Prostate gland (tissue), 2 donors: ENCODE measurements at regions of chr7 and their contacts with region 1.

Region 1: DNA sequence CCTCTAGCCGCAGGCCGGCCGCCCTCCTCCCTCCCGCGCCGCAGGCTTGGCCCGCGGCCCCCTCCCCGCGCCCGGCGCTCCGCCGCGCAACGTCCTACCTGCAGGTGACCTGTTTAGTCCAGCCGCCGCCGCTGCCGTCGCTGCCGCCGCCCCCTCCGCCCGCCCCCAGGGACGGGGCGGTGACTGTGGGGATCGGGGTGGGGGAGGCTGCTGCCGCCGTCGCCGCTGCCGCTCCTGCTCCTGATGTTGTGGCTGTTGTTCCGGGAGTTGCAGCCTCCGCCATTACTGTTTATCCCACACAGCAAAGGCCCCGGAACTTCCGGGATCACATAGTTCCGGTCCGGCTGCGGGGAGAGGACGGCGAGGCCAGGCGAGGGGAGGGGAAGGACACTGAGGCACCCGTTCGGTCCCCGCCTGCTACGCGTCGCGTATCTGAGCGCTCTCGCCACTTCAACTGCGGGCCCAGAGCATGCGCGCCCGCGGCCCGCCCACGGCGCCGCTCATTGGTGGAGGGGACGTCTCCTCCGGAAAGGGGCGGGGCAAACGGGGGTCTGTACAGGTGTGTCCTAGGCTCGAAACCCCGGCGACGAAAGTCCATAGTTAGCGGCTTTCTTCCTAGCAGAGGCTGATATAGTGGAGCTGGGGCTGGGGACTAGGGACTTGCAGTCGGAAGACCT is at the start of gene MKRN1:
- DNase-seq: peak; percentile 96
- H3K4me3 ChIP-seq: peak within 1 kb of the TSS; percentile 92 to 100
- H3K27ac ChIP-seq: peak within 1 kb of the TSS; percentile 91 to 92
- H3K4me1 ChIP-seq: no peaks in the 10 kb centered on the region
- H3K27me3 ChIP-seq: no peaks in the 10 kb centered on the region
- CTCF ChIP-seq: peak in 1 of 4 experiments; percentile 3
- POLR2A ChIP-seq: peak; percentile 87
- total RNA-seq, gene MKRN1: 69.0 to 108 TPM

Region 2: DNA sequence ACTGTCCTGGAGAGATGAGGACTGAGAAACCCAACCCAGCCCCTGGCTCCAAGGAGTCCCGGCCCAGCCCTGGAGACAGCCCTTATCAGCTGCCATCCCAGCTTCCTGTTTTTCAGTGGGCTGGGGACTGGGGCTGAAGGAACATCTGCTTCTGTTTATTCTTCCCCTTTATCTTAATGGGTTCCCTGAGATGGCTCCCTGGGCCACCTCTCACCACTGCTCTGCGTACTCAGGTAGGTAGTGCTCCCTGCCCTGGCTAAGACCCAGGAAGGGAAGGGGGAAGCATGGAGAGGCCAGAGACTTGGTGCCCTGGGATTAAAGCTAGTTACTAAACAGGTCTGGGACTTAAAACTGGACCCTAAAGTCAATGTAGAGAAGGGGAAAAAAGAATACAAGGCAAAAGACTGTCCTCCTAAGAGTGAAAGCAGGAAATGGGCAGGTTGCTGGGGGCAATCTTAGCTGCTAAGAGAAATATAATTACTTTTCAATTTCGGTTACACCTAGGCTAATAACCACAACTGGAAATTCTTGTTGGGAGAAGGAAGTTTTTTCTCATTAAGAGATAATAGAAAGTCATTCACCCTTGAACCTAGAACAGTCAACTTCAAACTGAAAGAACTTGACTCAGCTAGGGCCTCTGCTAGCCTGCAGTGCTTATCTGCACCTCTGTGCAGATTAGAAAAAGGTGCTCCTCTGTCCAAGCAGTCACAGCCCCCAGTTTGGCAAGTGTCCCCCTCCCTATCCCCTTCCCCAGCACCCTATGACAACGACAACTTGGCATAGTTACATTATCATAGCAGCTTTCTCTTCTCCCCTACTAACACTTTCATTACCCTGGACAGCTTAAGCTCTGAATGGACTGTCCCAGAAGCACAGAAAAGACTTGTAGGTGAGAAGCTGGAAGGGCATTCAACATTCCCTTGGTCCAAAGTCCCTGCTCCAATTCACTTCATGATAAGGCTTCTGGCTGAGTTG is 236.9 kb before region 1 on chr7:
- intact Hi-C with region 1: no loop called
- DNase-seq: no peak
- H3K4me3 ChIP-seq: no peak overlapping the region
- H3K27ac ChIP-seq: no peak overlapping the region
- H3K4me1 ChIP-seq: peaks cover 6% of the 10 kb centered on the region
- H3K27me3 ChIP-seq: no peaks in the 10 kb centered on the region
- CTCF ChIP-seq: no peak
- POLR2A ChIP-seq: no peak

Region 3: DNA sequence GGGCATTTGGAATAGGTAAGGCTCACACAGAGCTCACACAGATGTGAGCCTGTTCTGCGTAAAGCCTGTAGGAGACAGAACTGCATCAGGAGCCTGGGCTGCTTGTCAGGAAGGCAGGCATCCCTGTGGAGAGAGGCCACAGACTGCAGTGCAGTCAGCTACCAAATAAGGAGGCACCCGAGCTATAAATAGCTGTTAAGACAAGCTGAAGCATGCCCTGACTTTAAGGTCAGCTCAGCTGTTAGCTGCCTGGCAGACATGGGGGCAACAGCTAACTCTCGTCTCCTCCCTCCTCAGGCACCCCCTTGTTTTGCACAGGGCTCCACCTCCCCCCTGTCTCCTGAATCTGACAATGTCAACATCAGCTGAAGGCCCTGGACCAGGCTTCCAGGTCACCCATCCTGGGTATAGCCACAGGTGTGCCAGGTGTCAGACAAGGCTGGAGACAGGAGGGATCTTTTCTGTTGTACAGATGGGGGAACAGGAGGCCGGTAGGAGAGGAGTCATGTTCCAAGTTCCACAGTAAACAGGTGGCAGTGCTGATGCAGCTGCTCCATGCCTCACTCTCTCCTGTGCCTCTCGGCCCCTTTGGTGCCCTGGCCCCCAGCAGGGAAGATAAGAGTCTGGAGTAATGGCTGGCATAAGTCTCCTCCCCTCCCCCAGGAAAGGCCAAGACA is 27.7 kb after region 1 on chr7:
- intact Hi-C with region 1: loop called (anchors 2 kb)
- DNase-seq: peak; percentile 16
- H3K4me3 ChIP-seq: no peak overlapping the region
- H3K27ac ChIP-seq: peak overlapping the region in 1 of 2 donors; percentile 57
- H3K4me1 ChIP-seq: no peaks in the 10 kb centered on the region
- H3K27me3 ChIP-seq: no peaks in the 10 kb centered on the region
- CTCF ChIP-seq: peak in 1 of 4 experiments; percentile 7
- POLR2A ChIP-seq: no peak